Prostate gland (tissue), 2 donors: ENCODE measurements at regions of chr15 and their contacts with region 1.

Region 1: GRCh38 chr15:39472621-39473297 is 108.1 kb upstream of the THBS1 start:
- DNase-seq: no peak
- H3K4me3 ChIP-seq: no peak overlapping the region
- H3K27ac ChIP-seq: peak overlapping the region; percentile 46 to 48
- H3K4me1 ChIP-seq: no peaks in the 10 kb centered on the region
- H3K27me3 ChIP-seq: no peaks in the 10 kb centered on the region
- CTCF ChIP-seq: no peak
- POLR2A ChIP-seq: no peak

Region 2: GRCh38 chr15:39195988-39196486 is 276.7 kb before region 1 on chr15:
- intact Hi-C with region 1: no loop called
- DNase-seq: no peak
- H3K4me3 ChIP-seq: no peak overlapping the region
- H3K27ac ChIP-seq: no peak overlapping the region
- H3K4me1 ChIP-seq: no peaks in the 10 kb centered on the region
- H3K27me3 ChIP-seq: no peaks in the 10 kb centered on the region
- CTCF ChIP-seq: no peak
- POLR2A ChIP-seq: no peak

Region 3: DNA sequence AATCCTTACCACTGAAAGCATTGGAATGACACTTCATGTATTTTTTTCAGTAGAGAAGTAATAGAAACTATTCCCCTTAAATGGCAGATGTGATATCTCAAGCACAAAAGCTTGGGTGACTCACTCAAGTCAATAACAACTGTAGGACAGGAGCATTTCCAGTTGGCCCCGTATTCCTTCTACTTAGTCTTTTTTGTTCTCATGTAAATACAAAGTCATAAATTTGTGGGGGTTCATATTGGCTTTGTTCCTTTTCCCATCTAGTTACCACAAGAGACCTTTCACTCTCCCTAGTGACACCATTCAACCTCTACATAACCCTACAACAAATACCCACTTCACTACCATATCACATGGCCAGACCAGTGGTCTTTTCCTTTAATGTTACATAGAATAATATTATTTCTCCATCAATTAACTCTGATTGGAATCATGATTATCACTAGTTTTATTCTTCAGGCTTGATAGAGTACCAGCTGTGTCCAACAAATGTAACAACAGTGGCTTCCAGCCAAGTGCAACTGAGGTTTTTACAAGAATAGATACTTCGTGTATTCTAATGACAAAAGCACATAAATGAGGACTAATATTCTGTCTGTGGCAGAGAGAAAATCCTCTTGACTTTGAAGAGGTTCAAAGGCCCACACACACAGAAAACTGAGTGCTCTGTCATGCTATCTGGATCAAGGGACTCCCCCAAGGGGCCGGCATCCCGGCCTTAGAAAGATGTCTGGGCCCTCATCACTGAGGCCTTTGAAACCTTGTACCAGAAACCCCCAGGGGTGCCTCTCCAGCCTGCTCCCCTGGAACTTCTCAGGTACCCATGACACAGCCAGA is 14.1 kb after region 1 on chr15:
- intact Hi-C with region 1: loop called (anchors 2 kb)
- DNase-seq: no peak
- H3K4me3 ChIP-seq: no peak overlapping the region
- H3K27ac ChIP-seq: peak overlapping the region in 1 of 2 donors; percentile 40
- H3K4me1 ChIP-seq: no peaks in the 10 kb centered on the region
- H3K27me3 ChIP-seq: no peaks in the 10 kb centered on the region
- CTCF ChIP-seq: no peak
- POLR2A ChIP-seq: no peak